ENCODE measurements at regions of chr14 and their contacts with region 1.

Region 1: GRCh38 chr14:34280562-34280961 is 181.5 kb downstream of the SPTSSA start:
- DNase-seq: no peak
- H3K4me3 ChIP-seq: no peak overlapping the region
- H3K27ac ChIP-seq: no peak overlapping the region
- H3K4me1 ChIP-seq: no peaks in the 10 kb centered on the region
- H3K27me3 ChIP-seq: no peaks in the 10 kb centered on the region
- CTCF ChIP-seq: no peak

Region 2: GRCh38 chr14:32980902-32981501 is 1299.6 kb before region 1 on chr14:
- CTCF ChIA-PET with region 1: no interaction called
- POLR2A ChIA-PET with region 1: no interaction called
- intact Hi-C with region 1: no loop called
- DNase-seq: no peak
- H3K4me3 ChIP-seq: no peak overlapping the region
- H3K27ac ChIP-seq: peak overlapping the region; percentile 41
- H3K4me1 ChIP-seq: peaks cover 72% of the 10 kb centered on the region
- H3K27me3 ChIP-seq: no peaks in the 10 kb centered on the region
- CTCF ChIP-seq: no peak

Region 3: DNA sequence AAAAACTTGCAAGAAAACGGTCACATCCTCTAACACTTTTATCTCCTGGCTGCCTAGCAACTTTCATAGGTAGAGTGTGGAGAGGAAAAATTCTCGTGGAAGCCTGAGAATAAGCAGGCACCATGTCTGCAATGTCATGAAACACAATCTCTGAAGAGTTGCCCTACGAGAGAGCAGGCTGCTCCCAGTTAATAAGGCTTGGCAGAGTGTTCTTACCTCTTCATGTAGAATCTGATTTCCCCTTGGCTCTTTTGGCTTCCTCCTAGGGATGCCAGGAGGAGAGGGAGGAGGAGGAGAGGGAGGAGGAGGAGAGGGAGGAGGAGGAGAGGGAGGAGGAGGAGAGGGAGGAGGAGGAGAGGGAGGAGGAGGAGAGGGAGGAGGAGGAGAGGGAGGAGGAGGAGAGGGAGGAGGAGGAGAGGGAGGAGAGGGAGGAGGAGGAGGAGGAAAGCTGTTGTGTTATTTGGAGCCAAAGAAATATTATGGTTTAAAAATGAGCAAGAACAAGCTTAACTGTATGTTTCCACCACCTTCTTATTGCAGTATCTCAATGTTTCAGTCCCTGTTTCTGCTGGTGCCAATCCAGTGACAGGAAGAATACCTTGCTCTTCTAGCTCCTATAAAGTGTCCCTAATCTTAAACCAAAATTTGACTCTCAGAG is 382.6 kb before region 1 on chr14:
- CTCF ChIA-PET with region 1: no interaction called
- POLR2A ChIA-PET with region 1: interaction called, 11 read pairs
- intact Hi-C with region 1: no loop called
- DNase-seq: no peak
- H3K4me3 ChIP-seq: no peak overlapping the region
- H3K27ac ChIP-seq: no peak overlapping the region
- H3K4me1 ChIP-seq: no peaks in the 10 kb centered on the region
- H3K27me3 ChIP-seq: peaks cover 2% of the 10 kb centered on the region
- CTCF ChIP-seq: no peak

Region 4: DNA sequence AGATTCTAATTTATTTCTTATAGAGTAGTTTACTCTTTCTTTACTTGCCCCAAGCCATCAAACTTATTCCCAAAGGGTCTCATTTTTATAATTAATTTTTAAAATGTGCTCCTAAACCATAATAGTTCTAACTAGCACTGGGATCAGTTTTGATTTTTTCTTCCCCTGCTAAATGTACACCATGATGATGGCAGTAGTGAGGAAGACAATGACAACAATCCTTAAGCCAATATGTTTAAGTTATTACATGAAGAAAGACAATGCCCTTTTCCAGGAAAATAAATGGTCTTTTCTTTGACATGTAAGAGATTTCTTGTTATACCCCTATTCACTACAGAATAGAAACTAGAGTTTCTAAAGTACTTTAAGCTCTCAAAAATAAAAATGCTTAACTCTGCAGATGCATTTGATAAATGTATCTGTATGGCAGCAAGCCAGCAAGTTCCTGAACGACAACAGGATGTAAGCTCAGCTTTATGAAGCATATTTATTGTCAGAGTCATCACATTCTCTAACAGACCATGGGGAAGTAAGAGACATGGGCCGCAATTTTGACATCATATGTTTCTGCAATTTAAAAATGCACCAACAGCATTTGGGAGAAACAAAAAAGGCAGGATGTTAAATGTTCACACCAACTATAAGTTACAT is 385.3 kb after region 1 on chr14:
- CTCF ChIA-PET with region 1: no interaction called
- POLR2A ChIA-PET with region 1: no interaction called
- intact Hi-C with region 1: no loop called
- DNase-seq: peak; percentile 81
- H3K4me3 ChIP-seq: no peak overlapping the region
- H3K27ac ChIP-seq: peak overlapping the region; percentile 31
- H3K4me1 ChIP-seq: peaks cover 13% of the 10 kb centered on the region
- H3K27me3 ChIP-seq: no peaks in the 10 kb centered on the region
- CTCF ChIP-seq: no peak

Measured in A673 (cell line).